ENCODE measurements at regions of chr7 and their contacts with region 1.

Region 1: GRCh38 chr7:112886208-112886607 is 96.0 kb upstream of the TMEM168 start:
- DNase-seq: no peak

Region 2: GRCh38 chr7:112858838-112859237 is 27.4 kb before region 1 on chr7:
- intact Hi-C with region 1: no loop called
- DNase-seq: no peak

Region 3: DNA sequence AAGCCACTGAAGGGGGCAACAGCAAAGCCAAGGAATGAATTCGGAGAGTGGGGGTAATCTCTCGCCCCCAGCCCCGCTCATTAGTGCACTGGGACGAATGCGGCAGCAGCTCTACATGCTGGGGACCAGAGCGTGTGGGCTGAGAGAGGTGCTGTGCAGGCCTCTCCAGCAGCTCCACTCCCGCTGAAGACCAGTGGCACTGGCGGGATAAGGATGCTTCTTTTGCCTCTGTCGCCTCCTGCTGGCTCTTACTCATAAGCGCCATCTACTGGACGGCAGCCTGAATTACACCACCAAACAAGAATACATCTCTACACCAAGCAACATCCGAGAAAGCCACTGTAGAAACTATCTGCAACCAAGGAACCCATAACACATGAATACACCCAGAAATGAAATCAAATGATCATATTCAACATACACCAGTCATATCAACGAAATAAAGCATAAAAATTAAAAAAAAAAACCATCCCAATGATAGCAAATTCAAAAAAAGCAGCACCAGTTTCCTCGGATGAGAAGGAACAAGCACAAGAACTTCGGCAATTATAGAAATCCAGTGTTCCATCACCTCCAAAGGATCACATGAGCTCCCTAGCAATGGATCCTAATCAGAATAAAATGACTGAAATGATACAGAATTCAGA is 17.0 kb before region 1 on chr7:
- intact Hi-C with region 1: loop called in 1 of 2 experiments (anchors 2 kb)
- DNase-seq: no peak

Measured in posterior vena cava (tissue), 2 donors.